Right ventricle myocardium inferior (tissue), 1 donor: ENCODE measurements at regions of chr14 and their contacts with region 1.

Region 1: GRCh38 chr14:65412032-65412846 is at the start of gene FUT8:
- DNase-seq: peak; percentile 97
- ATAC-seq: peak; percentile 96
- total RNA-seq, gene FUT8: 15.7 TPM

Region 2: DNA sequence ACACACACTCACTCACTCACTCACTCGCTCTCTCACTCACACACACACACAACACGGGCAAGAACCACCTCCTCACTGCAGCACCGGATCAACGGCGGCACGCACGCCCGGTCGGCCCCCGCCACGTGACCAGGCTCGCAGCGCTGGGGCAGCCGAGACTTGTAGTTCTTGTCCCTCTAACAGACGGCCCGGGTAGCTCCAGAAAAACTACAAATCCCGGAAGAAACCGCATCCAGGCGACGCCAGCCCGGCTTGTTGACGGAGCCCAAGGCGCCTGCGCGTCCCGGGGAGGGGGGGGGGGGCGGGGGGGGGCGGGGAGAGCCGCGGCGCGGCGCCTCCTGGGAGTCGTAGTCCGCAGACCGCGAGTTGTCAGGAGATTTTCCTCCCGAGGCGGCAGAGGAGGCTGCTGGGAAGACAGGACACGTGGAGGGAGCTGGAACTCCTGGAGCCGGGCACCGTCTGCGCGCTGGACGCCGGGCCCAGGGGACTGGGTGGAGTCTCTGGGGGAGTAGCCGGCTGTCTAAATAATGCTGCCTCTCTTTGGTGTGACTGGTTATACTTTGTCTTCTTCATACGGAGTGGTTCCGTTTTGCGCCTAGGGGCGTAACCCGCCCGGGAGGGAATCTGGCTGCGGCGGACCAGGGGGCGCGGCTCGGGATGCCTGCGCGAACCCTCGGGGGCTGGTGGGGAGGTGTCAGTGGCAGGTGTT is 309.6 kb before region 1 on chr14 and contains the start of gene MAX:
- intact Hi-C with region 1: loop called (anchors 5 kb)
- DNase-seq: peak; percentile 99
- ATAC-seq: peak; percentile 97
- total RNA-seq, gene MAX: 92.1 TPM

Region 3: DNA sequence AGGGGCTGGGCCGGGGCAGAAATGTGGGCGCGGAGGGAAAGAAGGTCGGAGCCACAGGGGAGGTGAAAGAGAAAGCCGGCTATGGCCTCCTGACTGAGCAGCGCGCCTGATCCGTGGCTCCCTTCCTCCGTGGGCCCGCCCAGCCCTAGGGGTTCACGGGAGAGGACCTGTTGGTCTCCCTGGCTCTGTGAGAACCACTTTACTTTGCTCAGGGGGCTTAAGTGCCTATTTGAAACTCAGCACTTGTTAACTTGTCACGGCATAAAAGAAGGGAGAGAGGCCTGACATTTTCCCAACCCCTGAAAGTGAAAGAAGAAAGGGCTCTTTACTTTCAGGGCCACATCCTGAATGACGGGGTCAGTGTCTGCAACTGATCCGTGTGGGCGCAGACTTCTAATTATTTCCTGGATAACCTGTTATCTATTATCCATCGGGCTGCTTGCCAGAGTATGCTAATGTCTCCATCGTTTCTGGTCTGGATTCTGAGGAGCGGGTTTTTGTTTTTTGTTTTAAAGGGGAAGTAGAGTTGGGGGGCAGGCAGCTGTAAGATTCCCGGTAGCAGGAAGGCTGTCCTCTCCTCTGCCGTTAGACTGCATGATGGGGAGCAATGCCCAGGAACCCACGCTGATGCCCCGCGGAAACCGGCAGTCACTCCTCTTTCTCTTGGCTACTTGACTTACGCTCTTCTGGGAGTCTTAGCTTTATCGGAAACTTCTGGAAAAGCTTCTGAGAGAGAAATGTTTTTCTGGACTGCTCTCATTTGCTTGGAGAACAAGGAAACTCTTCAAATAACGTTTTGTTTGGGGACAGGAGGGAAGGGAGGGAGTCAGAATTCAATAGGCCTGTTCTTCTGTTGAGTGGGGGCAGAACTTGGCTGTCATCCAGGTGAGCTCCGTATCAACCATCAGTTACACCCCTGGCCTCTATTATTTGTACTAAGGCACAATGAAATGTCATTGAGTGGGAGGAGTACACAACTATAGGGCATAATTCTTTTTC is 182.2 kb before region 1 on chr14:
- intact Hi-C with region 1: loop called (anchors 5 kb)
- DNase-seq: no peak
- ATAC-seq: peak; percentile 70

Region 4: GRCh38 chr14:65396082-65396910 is 15.9 kb before region 1 on chr14:
- intact Hi-C with region 1: no loop called
- DNase-seq: no peak
- ATAC-seq: no peak

Region 5: GRCh38 chr14:65637780-65638179 is 225.5 kb after region 1 on chr14:
- intact Hi-C with region 1: no loop called
- DNase-seq: no peak
- ATAC-seq: no peak

Region 6: GRCh38 chr14:65824285-65824977 is 412.2 kb after region 1 on chr14:
- intact Hi-C with region 1: loop called (anchors 2 kb)
- DNase-seq: no peak
- ATAC-seq: peak; percentile 64

Region 7: DNA sequence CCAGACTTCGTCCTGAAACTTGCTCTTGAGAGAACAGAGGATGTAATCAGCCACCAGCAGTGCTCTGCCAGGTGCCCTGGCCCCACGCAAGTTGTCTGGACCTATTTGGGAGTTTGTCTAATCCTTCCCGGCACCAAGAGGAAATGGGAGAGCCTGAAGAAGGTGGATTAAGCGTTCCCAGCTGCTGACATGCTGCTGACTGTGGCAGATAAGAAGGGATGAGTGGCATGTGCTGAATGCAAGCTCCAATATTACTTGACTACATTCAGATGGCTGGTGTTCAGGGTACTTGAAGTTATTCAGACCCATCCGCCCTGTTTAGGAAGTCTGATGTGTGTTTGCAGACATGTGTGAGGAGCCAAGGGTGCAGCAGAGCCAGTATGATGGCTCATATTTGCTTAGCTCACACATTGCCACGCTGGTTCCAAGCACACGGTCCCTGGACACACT is 633.4 kb after region 1 on chr14:
- intact Hi-C with region 1: loop called (anchors 5 kb)
- DNase-seq: peak; percentile 72
- ATAC-seq: peak; percentile 96